Dorsolateral prefrontal cortex (tissue), 120 donors: ENCODE measurements at regions of chr1 and their contacts with region 1.

Region 1: GRCh38 chr1:111990878-111991718 is 1.6 kb upstream of the KCND3 start:
- DNase-seq: peak; percentile 49 to 87 (median 75)
- H3K4me3 ChIP-seq: peak overlapping the region; percentile 51 to 79 (median 69)
- H3K27ac ChIP-seq: peak overlapping the region in 58 of 59 donors; percentile 23 to 93 (median 84)
- H3K27me3 ChIP-seq: peaks cover 0 to 2% (median 0%) of the 10 kb centered on the region in 45 donors
- CTCF ChIP-seq: peak in 55 of 56 donors; percentile 31 to 75 (median 59)

Region 2: GRCh38 chr1:111769517-111770146 is 221.5 kb before region 1 on chr1:
- intact Hi-C with region 1: loop called in 1 of 2 experiments (anchors 5 kb)
- DNase-seq: peak in 1 of 10 donors; percentile 44
- H3K4me3 ChIP-seq: no peak overlapping the region
- H3K27ac ChIP-seq: peak overlapping the region in 8 of 59 donors; percentile 3 to 76 (median 24)
- H3K27me3 ChIP-seq: no peaks in the 10 kb centered on the region
- CTCF ChIP-seq: peak; percentile 71 to 97 (median 86)

Region 3: DNA sequence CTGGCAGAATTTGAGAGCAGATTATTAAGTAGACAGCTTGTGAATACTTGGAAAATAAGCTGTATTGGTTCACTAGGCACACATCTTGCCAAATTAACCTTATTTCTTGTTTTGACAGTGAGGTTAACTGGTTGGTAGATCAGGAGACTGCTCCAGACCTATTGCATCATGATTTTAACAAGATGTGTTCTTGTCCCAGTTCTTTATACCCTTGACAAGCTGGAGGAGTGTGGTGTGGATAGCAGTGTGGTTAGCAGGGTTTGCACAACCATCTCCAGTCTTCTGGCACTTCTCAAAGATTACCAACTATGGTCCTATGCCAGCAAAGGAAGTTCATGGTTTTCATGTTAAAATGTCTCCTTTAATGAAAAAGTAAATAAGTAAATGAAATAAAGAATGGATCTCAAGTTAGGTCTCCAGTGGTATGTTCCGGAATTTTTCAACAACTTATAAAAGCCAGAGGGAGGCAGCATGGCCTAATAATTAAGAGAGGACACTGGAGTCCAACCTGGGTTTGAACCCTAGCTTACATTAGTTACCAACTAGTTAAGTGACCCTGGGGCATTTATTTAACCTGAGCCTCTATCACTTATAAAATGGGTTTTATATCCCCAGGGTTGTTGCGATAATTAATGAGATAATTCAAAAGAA is 201.3 kb before region 1 on chr1:
- intact Hi-C with region 1: loop called in 1 of 2 experiments (anchors 10 kb)
- DNase-seq: no peak
- H3K4me3 ChIP-seq: no peak overlapping the region
- H3K27ac ChIP-seq: peak overlapping the region in 44 of 59 donors; percentile 7 to 89 (median 54)
- H3K27me3 ChIP-seq: no peaks in the 10 kb centered on the region
- CTCF ChIP-seq: peak in 45 of 56 donors; percentile 11 to 68 (median 34)

Region 4: DNA sequence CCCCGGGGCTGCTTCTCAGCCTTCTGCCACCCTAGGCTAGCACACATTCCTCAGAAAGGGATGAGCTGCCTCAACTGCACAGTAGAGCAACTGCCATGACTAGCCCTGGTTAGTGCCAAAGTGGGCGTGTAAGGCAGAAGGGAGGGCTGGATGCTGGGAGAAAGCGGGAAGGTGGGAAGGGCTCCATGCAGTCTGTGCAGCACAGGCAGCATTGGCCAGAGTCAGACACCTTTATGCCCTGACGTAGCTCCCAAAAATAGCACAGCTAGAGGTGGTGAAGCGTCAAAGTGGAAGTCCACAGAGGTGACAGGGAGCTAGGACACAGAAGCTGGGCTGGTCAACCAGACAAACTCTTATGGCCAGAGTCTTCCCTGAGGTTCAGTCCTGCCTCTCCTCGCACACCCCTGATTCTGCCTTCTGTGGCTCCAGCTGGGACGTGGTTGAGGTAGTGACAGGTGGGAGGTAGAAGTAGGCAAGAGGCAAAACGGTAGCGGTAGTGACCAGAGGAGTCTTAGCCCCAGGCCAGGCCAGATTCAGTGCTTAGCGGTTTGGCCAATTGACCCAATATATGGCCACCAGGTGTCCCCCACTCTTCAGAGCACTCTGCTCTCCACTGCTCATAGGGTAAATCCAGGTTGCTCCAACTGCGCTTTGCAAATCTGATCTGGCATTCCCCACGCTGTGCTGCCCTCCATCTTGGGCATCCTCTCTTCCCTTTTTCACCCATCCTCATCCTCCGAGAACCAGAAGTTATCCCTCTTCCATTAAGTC is 189.8 kb before region 1 on chr1:
- intact Hi-C with region 1: loop called (anchors 5 to 10 kb)
- DNase-seq: peak in 1 of 10 donors; percentile 64
- H3K4me3 ChIP-seq: no peak overlapping the region
- H3K27ac ChIP-seq: peak overlapping the region in 1 of 59 donors; percentile 71
- H3K27me3 ChIP-seq: no peaks in the 10 kb centered on the region
- CTCF ChIP-seq: peak in 8 of 56 donors; percentile 6 to 26 (median 18)

Region 5: GRCh38 chr1:111904478-111905218 is 86.5 kb before region 1 on chr1:
- intact Hi-C with region 1: loop called in 1 of 2 experiments (anchors 5 kb)
- DNase-seq: peak in 5 of 10 donors; percentile 29 to 66 (median 63)
- H3K4me3 ChIP-seq: peak overlapping the region in 17 of 59 donors; percentile 1 to 33 (median 24)
- H3K27ac ChIP-seq: peak overlapping the region in 51 of 59 donors; percentile 3 to 90 (median 71)
- H3K27me3 ChIP-seq: no peaks in the 10 kb centered on the region
- CTCF ChIP-seq: no peak

Region 6: DNA sequence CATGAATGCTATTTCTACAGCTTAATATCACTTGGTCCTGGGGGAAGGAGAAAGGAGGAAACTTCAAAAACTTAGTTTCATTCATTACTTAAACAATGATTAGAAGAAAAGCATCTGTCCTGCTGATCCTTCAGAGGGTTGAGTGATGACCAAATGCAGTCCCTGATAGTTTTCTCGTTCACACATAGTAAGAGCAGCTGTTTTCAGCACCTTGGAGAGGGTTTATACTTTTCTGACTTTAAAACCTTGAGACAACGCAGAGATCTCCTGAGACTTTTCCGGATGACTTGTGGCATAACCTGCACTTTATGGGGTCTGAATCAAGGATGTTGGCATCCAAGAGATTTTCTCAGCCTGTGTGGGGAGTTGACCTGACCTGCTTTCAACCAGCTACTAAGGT is 92.4 kb after region 1 on chr1:
- intact Hi-C with region 1: no loop called
- DNase-seq: no peak
- H3K4me3 ChIP-seq: no peak overlapping the region
- H3K27ac ChIP-seq: no peak overlapping the region
- H3K27me3 ChIP-seq: peaks cover 0 to 6% (median 0%) of the 10 kb centered on the region in 45 donors
- CTCF ChIP-seq: no peak

Region 7: DNA sequence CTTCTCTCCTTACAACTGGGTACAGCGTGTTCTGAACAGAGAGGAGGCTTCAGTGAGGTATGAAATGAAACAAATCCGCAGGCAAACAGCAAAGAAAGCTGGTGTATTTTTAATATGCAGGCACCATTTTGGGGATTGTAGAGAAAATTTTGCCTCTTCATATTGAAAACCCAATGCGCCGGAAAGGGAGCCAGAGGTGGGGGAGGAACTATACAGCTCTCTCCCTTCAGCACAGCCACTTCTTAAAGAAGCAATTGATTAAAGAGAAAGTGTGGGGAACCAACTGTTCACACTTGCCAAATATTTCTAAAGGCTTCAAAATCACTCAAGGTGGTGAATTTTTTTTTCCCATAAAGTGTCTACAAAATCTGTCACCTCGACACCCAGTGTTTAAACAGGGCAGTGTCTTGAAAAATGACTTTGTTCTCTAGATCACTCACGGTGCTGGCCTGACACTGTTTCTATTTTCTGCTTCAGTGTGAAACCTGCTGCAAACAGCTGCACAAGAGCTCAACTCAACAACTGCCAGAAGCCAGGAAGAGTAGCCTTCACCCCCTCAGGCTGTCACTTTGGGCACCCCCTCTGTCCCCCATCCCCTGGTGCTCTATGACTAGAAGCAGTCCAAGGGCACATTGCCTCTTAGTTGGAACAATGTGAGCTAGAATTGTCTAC is 281.1 kb after region 1 on chr1:
- intact Hi-C with region 1: loop called in 1 of 2 experiments (anchors 5 kb)
- DNase-seq: peak in 3 of 10 donors; percentile 43 to 62 (median 53)
- H3K4me3 ChIP-seq: no peak overlapping the region
- H3K27ac ChIP-seq: peak overlapping the region in 55 of 59 donors; percentile 8 to 89 (median 72)
- H3K27me3 ChIP-seq: no peaks in the 10 kb centered on the region
- CTCF ChIP-seq: no peak

Region 8: DNA sequence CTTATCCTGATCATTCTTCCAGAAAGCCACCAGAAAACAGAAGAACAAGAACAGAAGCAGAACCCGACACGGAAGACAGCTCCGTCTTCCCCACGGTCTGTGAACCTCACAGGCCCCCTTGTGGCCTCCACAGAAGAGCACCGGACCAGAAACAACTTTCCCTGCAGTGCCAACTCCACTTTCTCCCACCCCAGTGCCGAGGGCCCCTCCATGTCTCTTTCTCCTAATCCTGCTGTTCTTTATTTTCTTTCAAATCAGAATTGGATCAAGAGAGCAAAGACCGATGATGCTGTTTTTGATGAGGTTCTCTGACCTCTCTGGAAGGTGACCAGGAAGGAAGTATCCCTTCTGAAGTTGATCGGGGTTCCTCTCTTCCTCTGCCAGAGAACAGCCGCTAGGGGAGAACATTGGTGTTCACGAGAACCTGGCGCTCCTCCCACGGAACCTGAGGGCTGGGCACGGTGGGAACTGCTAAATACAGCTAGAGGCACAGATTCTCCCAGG is 346.0 kb after region 1 on chr1:
- intact Hi-C with region 1: loop called in 1 of 2 experiments (anchors 10 kb)
- DNase-seq: peak in 7 of 10 donors; percentile 27 to 65 (median 59)
- H3K4me3 ChIP-seq: peak overlapping the region in 5 of 59 donors; percentile 3 to 19 (median 14)
- H3K27ac ChIP-seq: peak overlapping the region in 10 of 59 donors; percentile 4 to 59 (median 16)
- H3K27me3 ChIP-seq: no peaks in the 10 kb centered on the region
- CTCF ChIP-seq: peak in 55 of 56 donors; percentile 18 to 77 (median 57)